GM10248 (cell line): ENCODE measurements at regions of chr3 and their contacts with region 1.

Region 1: DNA sequence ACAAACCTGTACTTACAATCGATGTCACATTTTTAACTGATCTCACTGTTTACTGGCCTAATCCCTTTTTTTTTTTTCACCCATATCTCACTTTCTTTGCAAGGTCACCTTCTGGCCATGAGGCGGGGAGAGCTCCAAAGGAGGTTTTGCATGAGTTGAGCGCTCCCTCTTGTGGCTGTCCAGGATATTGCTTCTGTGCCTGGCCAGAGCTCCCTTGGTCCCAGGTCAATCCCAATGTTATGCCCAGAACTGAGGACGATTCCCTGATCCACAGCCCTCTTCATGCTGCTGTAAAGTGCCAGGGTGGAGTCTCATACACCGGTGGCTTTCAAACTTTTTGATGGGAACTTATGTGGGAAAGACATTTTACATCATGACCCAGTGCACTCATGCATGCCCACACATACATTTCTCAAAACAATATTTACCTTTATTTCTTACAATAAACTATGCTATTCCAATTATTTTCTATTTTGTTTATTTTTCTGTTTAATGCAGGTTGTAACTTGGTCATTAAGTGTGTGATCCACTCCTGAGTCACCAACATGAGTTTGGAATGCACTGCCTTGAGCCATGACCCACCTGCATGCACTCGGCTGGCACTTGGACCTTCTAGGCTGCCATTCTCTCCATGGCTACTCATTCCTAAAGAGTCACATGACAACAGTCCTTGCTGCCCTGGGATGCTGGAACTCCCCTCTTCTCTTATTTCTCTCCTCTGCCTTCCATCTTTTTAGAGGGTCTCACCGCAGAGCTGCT is 9.6 kb upstream of the SST start:
- DNase-seq: peak; percentile 67
- CTCF ChIP-seq: peak; percentile 95

Region 2: DNA sequence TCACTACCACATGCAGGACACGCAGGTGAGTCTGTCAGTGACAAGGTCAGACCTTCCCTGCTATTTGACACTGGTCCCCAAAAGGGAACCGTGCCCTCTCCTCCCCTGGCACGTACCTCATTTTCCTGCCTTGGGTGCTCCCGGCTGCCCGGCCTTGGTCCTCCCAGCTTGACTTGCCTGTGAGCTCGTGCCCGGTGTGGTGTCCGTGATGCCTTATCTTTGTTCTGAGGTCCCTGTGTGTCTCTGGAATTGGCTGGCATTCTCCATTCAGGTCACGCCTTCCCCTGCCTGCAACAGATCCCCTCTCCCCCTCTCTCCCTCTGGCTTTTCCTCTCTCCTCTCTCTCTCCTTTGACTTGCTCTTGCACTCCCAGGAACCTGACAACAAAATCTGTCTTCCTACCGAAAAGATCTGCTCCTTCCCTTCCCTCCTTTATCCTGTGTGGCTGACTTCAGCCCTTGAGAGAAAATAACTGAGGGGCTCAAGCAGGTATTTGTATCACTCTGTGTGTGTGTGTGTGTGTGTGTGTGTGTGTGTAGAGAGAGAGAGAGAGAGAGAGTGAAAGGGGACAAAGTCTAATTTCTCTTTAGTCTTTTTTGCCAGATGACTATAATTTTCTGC is 388.2 kb before region 1 on chr3 and contains the start of gene MASP1:
- CTCF ChIA-PET with region 1: interaction called, 11 read pairs
- POLR2A ChIA-PET with region 1: no interaction called
- DNase-seq: no peak
- CTCF ChIP-seq: no peak

Region 3: DNA sequence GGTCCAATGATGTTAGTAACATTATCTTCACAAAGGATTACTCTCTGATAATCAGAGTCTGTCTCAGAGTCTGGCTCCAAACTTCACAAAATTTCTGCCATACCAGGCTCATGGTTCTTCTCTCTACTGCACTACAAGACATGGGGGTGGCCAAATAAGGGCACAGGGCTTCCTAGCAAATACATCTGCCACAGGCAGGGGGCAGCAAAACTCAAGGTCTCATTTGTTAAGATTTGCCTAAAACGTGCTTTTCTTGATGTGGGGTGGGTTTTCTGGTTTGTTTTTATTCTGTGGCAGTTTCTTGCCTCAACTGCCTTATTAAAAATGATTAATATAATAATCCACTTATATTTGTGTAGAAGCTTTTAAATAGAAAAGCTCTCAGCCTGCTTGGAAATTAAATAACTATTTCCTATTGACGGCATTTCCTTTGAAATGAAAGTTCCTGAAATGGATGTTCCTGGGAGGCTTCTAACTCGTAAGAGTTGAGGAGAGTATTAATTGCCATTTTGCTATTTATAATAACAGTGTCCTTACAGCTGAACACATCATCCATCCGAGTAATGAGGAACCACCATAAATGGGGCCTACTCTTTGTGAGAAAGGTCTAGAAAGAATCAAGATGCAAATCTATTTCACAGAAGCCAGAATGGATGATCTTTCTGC is 63.4 kb before region 1 on chr3:
- CTCF ChIA-PET with region 1: interaction called, 96 read pairs
- POLR2A ChIA-PET with region 1: no interaction called
- DNase-seq: peak; percentile 38
- CTCF ChIP-seq: peak; percentile 68

Region 4: DNA sequence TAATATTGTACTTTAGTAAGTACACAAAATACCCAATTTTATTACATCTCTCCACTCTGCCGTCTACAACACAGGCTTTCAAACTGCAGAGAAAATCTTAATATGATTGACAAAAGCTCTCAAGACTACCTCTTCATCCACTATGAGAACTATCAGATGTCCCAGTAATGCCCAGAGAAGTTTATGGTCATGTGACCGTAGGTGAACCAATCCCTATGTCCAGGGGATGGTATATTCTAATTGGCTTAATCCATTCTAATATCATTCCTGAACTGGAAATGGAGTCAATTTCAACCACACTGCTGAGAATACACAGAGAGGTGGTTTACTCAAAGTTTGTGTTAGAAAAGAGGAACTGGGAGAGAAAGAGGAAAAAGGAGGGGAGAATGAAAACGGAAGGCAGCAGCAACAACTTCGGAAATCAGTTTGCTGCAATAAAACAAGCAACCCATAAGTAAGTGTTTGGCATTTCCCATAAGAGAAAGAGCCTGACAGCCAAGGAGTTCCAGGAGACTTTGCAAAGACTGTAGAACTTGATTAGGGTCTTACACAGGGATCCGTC is 16.9 kb before region 1 on chr3:
- CTCF ChIA-PET with region 1: interaction called, 69 read pairs
- POLR2A ChIA-PET with region 1: no interaction called
- DNase-seq: no peak
- CTCF ChIP-seq: no peak

Region 5: GRCh38 chr3:187702507-187703033 is 22.8 kb after region 1 on chr3 and contains the start of gene RTP2:
- CTCF ChIA-PET with region 1: interaction called, 30 read pairs
- POLR2A ChIA-PET with region 1: no interaction called
- DNase-seq: no peak
- CTCF ChIP-seq: no peak